Vagina (tissue), 2 donors: ENCODE measurements at regions of chr19 and their contacts with region 1.

Region 1: DNA sequence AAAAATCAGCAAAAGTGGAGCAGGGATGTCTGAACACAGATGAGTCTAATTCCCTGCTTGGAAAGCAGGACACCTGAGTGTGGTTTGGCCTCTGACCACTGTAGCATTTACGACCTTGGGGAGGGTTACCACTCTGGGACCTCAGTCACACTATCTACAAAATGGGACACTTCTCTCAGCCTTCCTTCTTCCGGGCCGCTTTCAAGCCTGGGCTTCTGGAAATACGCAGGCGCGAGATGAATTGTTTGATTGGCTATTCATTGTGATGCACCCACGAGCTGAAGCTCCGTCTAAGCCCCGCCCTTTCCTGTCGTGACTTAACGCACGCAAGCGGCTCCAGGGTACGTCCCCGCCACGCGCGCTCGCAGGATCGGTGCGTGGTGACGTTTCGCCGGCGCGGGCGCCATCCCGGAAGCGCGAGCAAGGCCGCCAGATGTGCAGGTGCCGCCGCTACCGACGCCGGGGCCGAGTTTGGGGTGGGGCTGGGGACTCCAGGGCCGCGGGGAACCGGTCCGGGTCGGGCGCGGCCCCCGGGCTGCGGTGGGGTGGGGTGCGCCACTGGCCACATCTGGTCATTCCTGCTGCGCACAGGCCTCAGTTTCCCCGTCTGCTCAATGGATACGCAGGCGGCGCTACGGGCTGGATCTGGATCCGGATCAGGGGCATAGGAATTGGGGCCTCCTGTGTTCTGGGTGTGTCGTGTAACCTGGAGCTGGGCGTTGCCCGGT is at the start of gene KXD1:
- DNase-seq: peak in 1 of 2 donors; percentile 98
- H3K4me3 ChIP-seq: peak within 1 kb of the TSS; percentile 88 to 98
- H3K27ac ChIP-seq: peak within 1 kb of the TSS; percentile 98
- H3K4me1 ChIP-seq: peaks cover 35% of the 10 kb centered on the region
- H3K27me3 ChIP-seq: no peaks in the 10 kb centered on the region
- CTCF ChIP-seq: no peak
- POLR2A ChIP-seq: peak in 1 of 2 donors; percentile 63
- total RNA-seq, gene KXD1: 131 TPM

Region 2: DNA sequence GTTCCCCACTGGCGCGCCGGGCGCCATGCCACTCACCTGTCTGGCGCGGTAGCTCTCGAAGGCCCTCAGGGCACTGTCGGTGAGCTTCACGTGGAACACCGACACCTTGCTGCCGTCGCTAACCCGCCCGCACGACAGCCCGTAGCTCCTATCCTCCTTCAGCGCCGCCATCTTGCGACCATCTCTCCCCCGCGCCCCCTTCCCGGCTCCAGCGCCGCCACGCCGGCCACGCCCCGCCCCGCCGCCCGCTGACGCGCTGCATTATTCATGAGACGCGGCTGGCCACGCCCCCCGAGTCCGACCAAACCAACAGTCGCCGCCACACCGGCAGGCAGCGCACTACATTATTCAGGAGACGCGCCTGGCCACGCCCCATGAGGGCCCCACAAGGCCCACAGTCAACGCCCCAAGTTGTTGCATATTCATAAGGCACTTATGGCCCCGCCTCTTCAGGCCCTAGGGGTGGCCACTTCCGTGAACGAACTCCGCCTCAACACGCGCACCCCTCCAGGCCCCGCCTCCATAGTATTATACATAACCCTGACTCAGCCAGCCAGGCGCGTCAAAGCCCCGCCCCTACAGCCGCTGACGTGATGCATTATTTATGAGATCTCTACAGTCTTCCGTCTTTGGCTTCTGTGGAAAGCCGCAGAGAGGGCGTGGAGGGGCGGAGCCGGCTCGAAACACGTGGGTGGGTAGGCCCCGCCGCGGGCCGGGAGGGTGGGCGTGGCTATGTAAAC is 35.6 kb before region 1 on chr19 and contains the start of gene ELL:
- intact Hi-C with region 1: loop called (anchors 5 kb)
- DNase-seq: peak; percentile 100
- H3K4me3 ChIP-seq: peak within 1 kb of the TSS; percentile 95 to 100
- H3K27ac ChIP-seq: peak within 1 kb of the TSS; percentile 99
- H3K4me1 ChIP-seq: peaks cover 37% of the 10 kb centered on the region
- H3K27me3 ChIP-seq: no peaks in the 10 kb centered on the region
- CTCF ChIP-seq: no peak
- POLR2A ChIP-seq: peak in 1 of 2 donors; percentile 95
- total RNA-seq, gene ELL: 25.3 TPM